Activated T-helper 1 cell treated with anti-CD3 and anti-CD28 coated beads, Interleukin-12 subunit alpha, Interleukin-12 subunit beta, Interleukin-2, Interleukin-4 antibody, amounts not matched to agents 30 ng/mL and 10 ng/mL and 1 ng/mL, durations not matched to agents 14 hours and 24 hours and 36 hours (primary cell): ENCODE measurements at regions of chr2 and their contacts with region 1.

Region 1: GRCh38 chr2:159879051-159879604 is 81.1 kb upstream of the CD302 start:
- DNase-seq: no peak
- H3K4me3 Mint-ChIP-seq: no peak overlapping the region
- H3K27ac Mint-ChIP-seq: peak overlapping the region; percentile 86
- H3K4me1 Mint-ChIP-seq: peaks cover 32% of the 10 kb centered on the region
- H3K27me3 Mint-ChIP-seq: no peaks in the 10 kb centered on the region

Region 2: DNA sequence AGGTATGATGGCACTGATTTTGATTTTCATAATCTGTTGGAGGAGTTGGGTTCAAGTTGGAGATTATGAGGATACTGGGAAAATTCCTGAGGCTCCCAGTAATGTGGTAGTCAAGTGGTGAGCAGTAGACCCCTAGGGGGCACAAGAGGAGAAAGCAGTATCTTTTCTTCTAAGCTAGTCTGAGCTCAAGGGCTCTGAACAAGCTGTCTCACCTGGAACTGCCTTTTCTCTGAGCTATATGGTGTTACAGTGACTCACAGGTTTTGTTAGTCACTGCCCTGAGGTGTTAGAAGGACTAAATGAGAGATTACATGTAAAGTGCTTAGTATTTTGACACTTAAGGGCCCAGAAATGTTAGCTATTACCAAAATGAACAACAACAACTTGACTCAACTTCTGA is 123.3 kb before region 1 on chr2:
- intact Hi-C with region 1: loop called (anchors 5 kb)
- DNase-seq: no peak
- H3K4me3 Mint-ChIP-seq: no peak overlapping the region
- H3K27ac Mint-ChIP-seq: no peak overlapping the region
- H3K4me1 Mint-ChIP-seq: peaks cover 31% of the 10 kb centered on the region
- H3K27me3 Mint-ChIP-seq: no peaks in the 10 kb centered on the region

Region 3: GRCh38 chr2:159855557-159856061 is 23.5 kb before region 1 on chr2:
- intact Hi-C with region 1: loop called (anchors 2 kb)
- DNase-seq: no peak
- H3K4me3 Mint-ChIP-seq: no peak overlapping the region
- H3K27ac Mint-ChIP-seq: no peak overlapping the region
- H3K4me1 Mint-ChIP-seq: peaks cover 6% of the 10 kb centered on the region
- H3K27me3 Mint-ChIP-seq: no peaks in the 10 kb centered on the region

Region 4: DNA sequence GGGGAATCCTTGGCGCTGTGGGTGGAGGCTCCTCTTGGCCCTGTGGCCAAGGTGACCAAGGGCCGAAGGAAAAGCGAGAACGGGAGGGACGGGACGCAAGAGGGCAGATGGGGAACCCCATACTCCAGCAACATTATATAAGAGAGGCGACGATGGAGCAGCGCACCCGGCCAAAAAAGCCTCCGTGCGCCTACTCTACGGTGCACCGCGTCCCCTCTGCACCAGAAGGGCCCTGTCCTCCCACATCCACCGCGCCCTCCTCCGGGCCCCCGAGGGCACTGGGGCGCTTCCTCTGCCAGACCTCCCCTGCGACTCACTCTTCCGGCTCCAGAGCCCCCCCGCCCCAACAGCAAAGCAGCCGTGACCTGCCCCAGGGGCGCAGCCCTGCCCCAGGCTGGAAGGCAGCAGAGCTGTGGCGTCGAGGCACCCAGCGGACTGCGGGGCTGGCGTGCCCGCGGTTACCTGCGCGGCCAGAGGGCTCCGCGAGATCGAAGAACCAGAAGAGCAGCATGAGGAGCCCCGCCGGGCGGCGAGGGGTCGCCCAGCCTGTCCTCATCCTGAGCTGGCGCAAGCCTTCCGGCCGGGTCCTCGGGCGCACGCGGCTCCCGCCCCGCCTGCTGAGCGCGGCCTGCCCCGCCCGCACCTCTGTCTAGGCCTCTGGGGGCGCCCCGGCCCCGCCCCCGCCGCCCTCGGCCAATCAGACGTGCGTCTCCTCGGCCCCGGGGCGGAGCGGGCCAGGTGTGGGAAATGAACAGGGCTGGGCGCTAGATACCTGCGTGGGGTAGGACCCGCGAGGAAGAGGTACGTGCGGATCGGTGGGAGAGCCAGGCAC is 25.2 kb after region 1 on chr2:
- intact Hi-C with region 1: loop called (anchors 1 kb)
- DNase-seq: peak; percentile 69
- H3K4me3 Mint-ChIP-seq: peak within 1 kb of the TSS; percentile 92
- H3K27ac Mint-ChIP-seq: peak within 1 kb of the TSS; percentile 91
- H3K4me1 Mint-ChIP-seq: peaks cover 41% of the 10 kb centered on the region
- H3K27me3 Mint-ChIP-seq: no peaks in the 10 kb centered on the region

Region 5: GRCh38 chr2:159960383-159960782 is 81.3 kb after region 1 on chr2:
- intact Hi-C with region 1: loop called (anchors 1 kb)
- DNase-seq: no peak
- H3K4me3 Mint-ChIP-seq: no peak overlapping the region
- H3K27ac Mint-ChIP-seq: no peak overlapping the region
- H3K4me1 Mint-ChIP-seq: peaks cover 8% of the 10 kb centered on the region
- H3K27me3 Mint-ChIP-seq: peaks cover 4% of the 10 kb centered on the region

Region 6: DNA sequence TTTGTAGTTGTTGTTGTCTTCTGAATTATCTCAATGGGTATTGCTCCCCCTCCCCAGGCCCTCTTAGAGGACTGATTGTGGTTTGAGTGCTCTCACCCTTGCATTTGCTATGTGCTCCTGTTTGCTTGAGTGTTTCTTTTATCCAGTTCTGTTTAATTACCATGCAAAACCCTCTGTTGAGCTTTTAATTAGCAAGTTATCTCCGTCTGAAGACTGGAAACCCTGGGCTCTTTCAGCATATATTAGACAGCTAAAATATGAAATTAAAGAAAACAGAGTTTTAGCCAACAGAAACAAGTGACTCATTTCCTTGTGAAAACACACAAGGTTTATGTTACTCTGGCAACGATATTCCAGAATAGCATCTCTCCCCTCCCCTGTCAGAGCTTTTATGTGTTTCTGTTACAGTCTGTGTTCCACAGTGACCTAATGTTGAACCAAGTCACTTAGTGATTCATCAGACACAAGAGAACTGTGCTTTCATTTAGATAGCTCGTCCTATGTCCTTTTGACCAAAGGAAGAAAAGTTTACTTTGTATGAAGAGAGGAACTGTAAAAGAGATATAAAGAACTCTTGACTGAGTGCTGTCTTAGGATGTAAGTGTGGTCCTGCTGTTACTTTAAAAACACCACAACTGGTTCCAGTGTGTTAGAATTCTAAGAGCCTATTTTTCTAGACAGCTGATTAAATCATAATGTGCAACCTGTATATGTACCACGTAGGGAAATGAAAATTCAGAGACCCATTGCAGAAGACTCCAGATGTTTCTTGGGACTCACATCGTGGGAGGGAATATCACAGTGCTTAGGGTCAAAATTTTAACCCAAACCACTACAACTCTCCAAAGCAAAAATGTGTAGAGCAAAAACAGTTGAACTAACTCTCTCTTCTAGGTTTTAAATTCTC is 787.3 kb after region 1 on chr2:
- intact Hi-C with region 1: no loop called
- DNase-seq: no peak
- H3K4me3 Mint-ChIP-seq: no peak overlapping the region
- H3K27ac Mint-ChIP-seq: peak overlapping the region; percentile 36
- H3K4me1 Mint-ChIP-seq: peaks cover 21% of the 10 kb centered on the region
- H3K27me3 Mint-ChIP-seq: no peaks in the 10 kb centered on the region